A673 (cell line): ENCODE measurements at regions of chr1 and their contacts with region 1.

Region 1: GRCh38 chr1:28266920-28267322 is 7.6 kb downstream of the SESN2 start:
- DNase-seq: no peak
- H3K4me3 ChIP-seq: no peak overlapping the region
- H3K27ac ChIP-seq: no peak overlapping the region
- H3K4me1 ChIP-seq: no peaks in the 10 kb centered on the region
- H3K27me3 ChIP-seq: no peaks in the 10 kb centered on the region
- CTCF ChIP-seq: no peak

Region 2: GRCh38 chr1:28280501-28280900 is 13.6 kb after region 1 on chr1:
- CTCF ChIA-PET with region 1: no interaction called
- POLR2A ChIA-PET with region 1: interaction called, 16 read pairs
- intact Hi-C with region 1: no loop called
- DNase-seq: no peak
- H3K4me3 ChIP-seq: no peak overlapping the region
- H3K27ac ChIP-seq: no peak overlapping the region
- H3K4me1 ChIP-seq: no peaks in the 10 kb centered on the region
- H3K27me3 ChIP-seq: no peaks in the 10 kb centered on the region
- CTCF ChIP-seq: no peak

Region 3: DNA sequence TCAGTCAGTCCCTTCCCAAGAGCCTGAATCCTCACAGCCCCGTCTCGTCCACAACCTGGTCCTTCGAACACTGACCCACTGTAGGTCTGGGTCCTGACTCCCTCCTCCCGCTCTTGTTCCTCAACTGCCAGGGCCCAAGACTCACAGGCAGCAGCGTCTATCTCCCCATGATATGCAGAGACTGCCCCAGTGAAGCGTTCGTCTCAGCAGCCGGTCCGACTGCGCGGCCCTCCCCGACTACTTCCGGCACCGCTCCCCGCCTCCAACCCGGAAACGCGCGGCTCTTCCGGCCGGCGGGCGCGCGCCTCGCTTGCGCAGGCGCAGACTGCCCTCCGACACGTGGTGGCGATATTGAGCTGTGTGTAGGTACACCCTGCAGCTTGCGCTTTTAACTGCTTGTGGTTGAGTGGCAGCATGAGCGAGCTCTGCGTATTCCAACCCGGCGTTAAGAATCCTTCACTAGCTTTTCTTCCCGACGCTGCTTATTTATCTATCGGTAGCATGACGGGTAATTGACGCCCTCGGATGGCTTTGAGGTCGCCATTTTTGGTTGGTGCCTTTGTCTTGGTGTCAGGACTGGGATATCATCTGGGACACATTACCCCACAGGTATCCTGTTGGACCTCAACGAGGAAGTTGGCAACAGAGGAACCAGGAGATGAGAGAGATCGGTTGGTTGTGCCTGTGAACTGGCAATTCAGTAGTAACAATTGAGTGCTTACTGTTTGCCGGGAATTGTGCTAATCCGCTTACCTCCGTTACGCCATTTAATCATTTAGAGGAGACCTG is 376.1 kb after region 1 on chr1 and contains the start of gene TAF12:
- CTCF ChIA-PET with region 1: no interaction called
- POLR2A ChIA-PET with region 1: no interaction called
- intact Hi-C with region 1: no loop called
- DNase-seq: peak; percentile 98
- H3K4me3 ChIP-seq: peak within 1 kb of the TSS; percentile 81
- H3K27ac ChIP-seq: peak within 1 kb of the TSS; percentile 82
- H3K4me1 ChIP-seq: peaks cover 16% of the 10 kb centered on the region
- H3K27me3 ChIP-seq: no peaks in the 10 kb centered on the region
- CTCF ChIP-seq: peak; percentile 54
- total RNA-seq, gene TAF12: 17.9 and 22.6 TPM in 2 replicates